PC-9 (cell line): ENCODE measurements at regions of chr4 and their contacts with region 1.

Region 1: GRCh38 chr4:70925418-70925817 is 23.2 kb downstream of the MOB1B start:
- DNase-seq: no peak
- H3K4me3 ChIP-seq: no peak overlapping the region
- H3K27ac ChIP-seq: no peak overlapping the region
- H3K4me1 ChIP-seq: no peaks in the 10 kb centered on the region
- H3K27me3 ChIP-seq: no peaks in the 10 kb centered on the region
- CTCF ChIP-seq: no peak

Region 2: DNA sequence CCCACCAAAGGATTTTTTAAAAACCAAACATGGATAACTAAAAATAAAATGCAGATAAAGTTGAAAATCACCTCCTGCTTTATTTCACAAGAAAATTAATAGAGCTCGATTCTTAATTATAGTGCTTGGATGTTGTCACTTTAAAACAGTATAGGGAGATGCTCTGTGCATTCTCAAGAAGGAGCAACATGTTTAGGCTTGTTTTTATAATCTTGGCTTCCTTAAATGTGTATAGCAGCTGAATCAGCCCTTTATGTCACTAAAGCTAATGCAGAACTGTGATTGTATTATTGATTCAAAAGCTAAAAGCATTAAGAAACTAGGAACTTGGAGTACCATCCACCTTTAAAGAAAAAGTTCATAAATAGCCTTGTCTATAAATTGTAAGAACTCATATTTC is 224.1 kb before region 1 on chr4:
- CTCF ChIA-PET with region 1: no interaction called
- POLR2A ChIA-PET with region 1: no interaction called
- intact Hi-C with region 1: no loop called
- DNase-seq: no peak
- H3K4me3 ChIP-seq: no peak overlapping the region
- H3K27ac ChIP-seq: no peak overlapping the region
- H3K4me1 ChIP-seq: peaks cover 12% of the 10 kb centered on the region; the same call in 1 of the 2 replicates
- H3K27me3 ChIP-seq: no peaks in the 10 kb centered on the region
- CTCF ChIP-seq: no peak

Region 3: DNA sequence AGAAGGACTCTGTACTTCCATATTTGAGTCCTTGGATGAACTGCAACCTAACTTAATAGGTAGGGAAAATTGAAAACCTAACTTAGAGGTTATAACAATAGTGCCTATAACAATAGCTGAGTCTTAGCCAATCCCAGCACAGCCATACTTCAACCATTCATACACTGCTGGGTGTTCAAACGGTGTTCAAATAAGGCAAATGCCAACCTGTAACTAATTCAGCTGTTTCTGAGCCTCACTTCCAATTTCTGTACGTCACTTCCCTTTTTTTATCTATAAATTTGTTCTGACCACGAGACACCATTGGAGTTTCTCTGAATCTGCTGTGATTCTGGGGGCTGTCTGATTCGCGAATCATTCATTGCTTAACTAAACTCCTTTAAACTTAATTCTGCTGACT is 76.1 kb before region 1 on chr4:
- CTCF ChIA-PET with region 1: no interaction called
- POLR2A ChIA-PET with region 1: interaction called, 11 read pairs
- intact Hi-C with region 1: no loop called
- DNase-seq: no peak
- H3K4me3 ChIP-seq: no peak overlapping the region
- H3K27ac ChIP-seq: no peak overlapping the region
- H3K4me1 ChIP-seq: no peaks in the 10 kb centered on the region
- H3K27me3 ChIP-seq: no peaks in the 10 kb centered on the region
- CTCF ChIP-seq: no peak

Region 4: DNA sequence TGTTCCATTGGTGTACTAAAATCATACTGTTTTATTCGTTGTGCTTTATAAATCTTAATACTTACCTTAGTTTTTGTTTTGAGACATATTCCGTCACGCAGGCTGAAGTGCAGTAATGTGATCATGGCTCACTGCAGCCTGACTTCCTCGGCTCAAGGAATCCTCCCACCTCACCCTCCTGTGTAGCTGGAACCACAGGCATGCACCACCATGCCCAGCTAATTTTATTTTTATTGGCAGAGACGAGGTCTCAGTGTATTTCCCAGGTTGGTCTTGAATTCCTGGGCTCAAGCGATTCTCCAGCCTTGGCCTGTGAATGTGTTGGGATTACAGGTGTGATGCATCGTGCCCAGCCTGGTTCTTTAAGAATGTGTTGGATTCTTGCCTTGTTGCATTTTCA is 43.7 kb after region 1 on chr4:
- CTCF ChIA-PET with region 1: no interaction called
- POLR2A ChIA-PET with region 1: no interaction called
- intact Hi-C with region 1: no loop called
- DNase-seq: no peak
- H3K4me3 ChIP-seq: no peak overlapping the region
- H3K27ac ChIP-seq: no peak overlapping the region
- H3K4me1 ChIP-seq: no peaks in the 10 kb centered on the region
- H3K27me3 ChIP-seq: no peaks in the 10 kb centered on the region
- CTCF ChIP-seq: no peak